Activated CD4-positive, alpha-beta T cell treated with anti-CD3 and anti-CD28 coated beads for 36 hours (primary cell): ENCODE measurements at regions of chr21 and their contacts with region 1.

Region 1: DNA sequence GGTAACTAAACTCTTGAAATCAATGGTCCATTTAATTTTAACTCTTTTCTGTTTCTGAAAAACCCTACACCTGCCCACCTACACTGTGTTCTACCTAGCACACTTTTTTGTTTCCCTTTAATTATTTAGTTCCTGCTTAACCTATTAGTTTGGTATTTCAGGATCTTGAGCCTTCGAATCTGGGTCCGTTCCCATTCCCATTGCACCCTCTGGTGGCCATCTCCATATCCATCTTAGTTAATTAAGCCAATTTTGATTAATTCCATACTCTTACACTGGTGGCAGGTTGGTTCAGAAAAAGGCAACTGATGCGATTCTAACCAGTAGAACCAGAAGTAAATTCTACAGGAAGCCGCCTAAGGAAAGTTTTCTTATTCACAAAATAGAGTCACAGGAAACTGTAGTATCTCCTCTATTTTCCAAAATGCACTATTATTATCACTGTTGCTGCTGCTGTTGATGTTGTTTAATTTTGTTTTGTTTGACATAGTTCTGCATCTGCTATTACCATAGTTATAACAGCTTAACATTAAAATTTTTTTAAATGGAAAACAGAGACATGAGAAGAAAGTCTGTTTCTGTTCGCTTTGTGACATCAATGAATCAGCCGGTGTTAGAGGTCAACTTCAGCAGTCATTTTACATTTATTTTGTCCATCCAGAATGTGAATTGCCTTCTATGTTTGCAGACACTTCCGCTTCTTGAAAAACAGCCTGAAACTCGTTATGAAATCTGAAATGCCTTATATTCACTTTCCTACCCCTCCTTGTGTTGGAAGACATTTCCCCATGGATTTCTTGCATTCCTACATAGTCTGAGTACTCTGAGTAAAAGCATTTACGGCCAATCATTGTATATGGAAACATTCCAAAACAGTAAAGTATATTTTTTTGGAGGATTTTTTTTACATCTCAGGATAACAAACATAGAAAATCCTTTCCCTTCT is 115.5 kb upstream of the NCAM2 start:
- DNase-seq: peak; percentile 32
- ATAC-seq: no peak
- H3K4me3 Mint-ChIP-seq: no peak overlapping the region
- H3K27ac Mint-ChIP-seq: no peak overlapping the region
- H3K4me1 Mint-ChIP-seq: no peaks in the 10 kb centered on the region
- H3K27me3 Mint-ChIP-seq: no peaks in the 10 kb centered on the region

Region 2: DNA sequence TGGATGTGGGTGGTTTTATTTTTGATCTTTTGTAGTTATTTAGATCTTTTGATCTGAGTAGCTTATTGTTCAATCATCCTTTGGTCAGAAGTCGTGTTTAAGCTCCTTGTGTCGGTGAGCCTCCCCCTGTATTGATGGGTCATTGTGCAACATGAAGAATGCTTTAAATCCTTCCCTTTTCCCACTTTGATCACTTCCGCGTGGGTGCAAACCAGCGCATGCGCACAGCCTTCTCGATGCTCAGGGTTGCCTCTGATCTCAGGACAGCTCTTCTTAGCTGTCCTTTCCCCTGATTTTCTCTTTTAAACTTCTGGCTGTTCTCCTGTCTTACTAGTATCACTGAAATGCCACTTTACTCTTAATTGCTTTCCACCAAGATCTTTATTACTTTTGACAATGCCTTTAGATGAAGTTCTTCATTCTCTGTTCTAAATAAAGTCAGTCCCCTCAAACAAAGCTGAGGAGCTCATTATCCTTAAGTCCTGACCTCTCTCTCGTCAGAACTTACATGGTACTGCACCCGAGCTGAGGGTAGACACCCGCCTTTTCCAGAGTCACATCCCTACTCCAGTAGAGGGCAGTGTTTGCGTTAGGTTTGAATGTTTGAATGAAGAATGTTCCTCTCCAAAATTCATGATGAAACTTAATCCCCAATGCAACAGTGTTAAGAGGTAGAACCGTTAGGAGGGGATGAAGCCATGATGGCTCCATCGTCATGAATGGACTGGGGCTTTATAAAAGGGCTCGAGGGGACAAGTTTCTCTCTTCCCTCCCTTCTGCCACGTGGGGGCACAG is 1931.3 kb before region 1 on chr21:
- CTCF ChIA-PET with region 1: no interaction called
- POLR2A ChIA-PET with region 1: no interaction called
- intact Hi-C with region 1: loop called in 1 of 2 experiments (anchors 5 kb)
- DNase-seq: peak; percentile 13
- ATAC-seq: no peak
- H3K4me3 Mint-ChIP-seq: no peak overlapping the region
- H3K27ac Mint-ChIP-seq: no peak overlapping the region
- H3K4me1 Mint-ChIP-seq: no peaks in the 10 kb centered on the region
- H3K27me3 Mint-ChIP-seq: no peaks in the 10 kb centered on the region

Region 3: GRCh38 chr21:20811702-20812101 is 71.0 kb before region 1 on chr21:
- CTCF ChIA-PET with region 1: no interaction called
- POLR2A ChIA-PET with region 1: no interaction called
- intact Hi-C with region 1: no loop called
- DNase-seq: no peak
- ATAC-seq: no peak
- H3K4me3 Mint-ChIP-seq: no peak overlapping the region
- H3K27ac Mint-ChIP-seq: no peak overlapping the region
- H3K4me1 Mint-ChIP-seq: no peaks in the 10 kb centered on the region
- H3K27me3 Mint-ChIP-seq: no peaks in the 10 kb centered on the region

Region 4: DNA sequence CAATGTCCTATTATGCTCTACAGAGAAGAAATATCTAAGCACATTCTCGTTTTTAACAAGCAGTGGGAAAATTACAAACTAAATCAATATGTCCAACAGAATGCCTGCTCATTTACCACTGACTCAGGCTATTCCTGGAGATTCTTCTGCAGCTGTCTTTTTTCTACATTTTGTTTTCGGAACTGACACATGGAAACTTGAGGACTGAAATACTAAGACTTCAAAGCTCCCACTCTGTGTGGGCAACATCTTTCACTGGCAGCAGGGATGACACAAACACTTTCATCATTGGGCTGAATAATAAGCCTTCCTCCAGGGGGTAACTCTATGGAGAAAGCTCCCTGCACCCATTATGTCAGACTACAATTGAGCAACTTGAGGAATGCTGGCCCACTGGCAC is 60.1 kb before region 1 on chr21:
- CTCF ChIA-PET with region 1: no interaction called
- POLR2A ChIA-PET with region 1: no interaction called
- intact Hi-C with region 1: loop called in 1 of 2 experiments (anchors 10 kb)
- DNase-seq: no peak
- ATAC-seq: no peak
- H3K4me3 Mint-ChIP-seq: no peak overlapping the region
- H3K27ac Mint-ChIP-seq: no peak overlapping the region
- H3K4me1 Mint-ChIP-seq: no peaks in the 10 kb centered on the region
- H3K27me3 Mint-ChIP-seq: no peaks in the 10 kb centered on the region